ENCODE measurements at regions of chr2 and their contacts with region 1.

Region 1: DNA sequence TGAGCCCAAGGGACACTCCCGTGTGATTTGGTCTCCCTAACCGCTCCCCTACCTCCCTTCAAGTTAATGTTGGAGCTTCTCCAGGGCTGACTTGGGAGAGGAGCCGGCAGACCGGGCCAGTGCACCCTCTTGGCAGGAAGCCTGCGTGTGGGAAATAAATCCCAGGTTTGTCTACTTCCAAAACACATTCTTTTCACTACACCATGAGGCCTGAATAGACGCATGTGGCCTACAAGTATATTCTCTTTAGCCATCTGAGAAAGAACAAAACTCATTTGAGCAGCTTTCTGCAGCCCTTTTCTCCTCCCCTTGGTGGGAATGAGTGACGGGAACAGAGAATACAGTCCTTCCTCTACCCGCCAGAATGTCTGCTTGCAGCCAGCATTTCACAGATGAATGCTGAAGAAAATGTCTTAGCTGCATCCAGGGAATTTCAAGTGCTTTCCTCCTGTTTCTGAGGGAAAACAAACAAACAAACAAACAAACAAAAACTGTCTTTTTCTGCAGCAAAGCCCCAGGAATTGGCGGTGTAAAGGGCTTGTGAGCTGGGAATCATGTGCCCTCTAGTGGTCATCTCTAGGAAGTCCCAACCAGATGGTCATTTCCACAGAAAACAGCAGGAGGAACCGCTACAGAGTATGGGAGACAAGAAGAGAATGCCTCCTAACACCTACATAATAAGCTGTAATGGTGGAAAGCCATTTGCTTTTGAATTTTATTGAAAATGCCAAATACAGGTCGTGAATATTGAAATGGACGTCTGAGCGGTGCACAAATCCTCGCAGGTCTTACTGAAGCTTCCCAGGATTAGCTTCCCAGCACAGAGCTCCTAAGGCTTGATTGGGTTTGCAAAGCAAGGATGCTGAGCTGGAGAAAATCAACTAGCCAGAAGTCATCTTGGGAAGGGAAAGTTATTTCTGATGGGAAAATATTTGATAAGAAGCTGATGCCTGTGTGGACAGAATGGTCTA is 41.2 kb upstream of the DAPL1 start:
- DNase-seq: peak; percentile 22
- ATAC-seq: peak; percentile 88
- H3K4me3 Mint-ChIP-seq: peak overlapping the region; percentile 47
- H3K27ac Mint-ChIP-seq: no peak overlapping the region
- H3K4me1 Mint-ChIP-seq: peaks cover 8% of the 10 kb centered on the region
- H3K27me3 Mint-ChIP-seq: no peaks in the 10 kb centered on the region
- CTCF ChIP-seq: peak; percentile 81

Region 2: GRCh38 chr2:158034199-158034866 is 719.6 kb before region 1 on chr2:
- CTCF ChIA-PET with region 1: interaction called, 45 read pairs
- POLR2A ChIA-PET with region 1: no interaction called
- DNase-seq: peak; percentile 31
- ATAC-seq: peak; percentile 99
- H3K4me3 Mint-ChIP-seq: no peak overlapping the region
- H3K27ac Mint-ChIP-seq: no peak overlapping the region
- H3K4me1 Mint-ChIP-seq: peaks cover 2% of the 10 kb centered on the region; the same call in 1 of the 2 replicates
- H3K27me3 Mint-ChIP-seq: no peaks in the 10 kb centered on the region
- CTCF ChIP-seq: 0 out of 2 replicates have a peak, but pooled peaks have one; percentile 19

Region 3: GRCh38 chr2:158512323-158512722 is 241.6 kb before region 1 on chr2:
- CTCF ChIA-PET with region 1: no interaction called
- POLR2A ChIA-PET with region 1: no interaction called
- DNase-seq: no peak
- ATAC-seq: no peak
- H3K4me3 Mint-ChIP-seq: no peak overlapping the region
- H3K27ac Mint-ChIP-seq: no peak overlapping the region
- H3K4me1 Mint-ChIP-seq: peaks cover 29% of the 10 kb centered on the region
- H3K27me3 Mint-ChIP-seq: no peaks in the 10 kb centered on the region
- CTCF ChIP-seq: no peak

Region 4: GRCh38 chr2:158688722-158689121 is 65.2 kb before region 1 on chr2:
- CTCF ChIA-PET with region 1: interaction called, 16 read pairs
- POLR2A ChIA-PET with region 1: no interaction called
- DNase-seq: no peak
- ATAC-seq: peak; percentile 30
- H3K4me3 Mint-ChIP-seq: no peak overlapping the region
- H3K27ac Mint-ChIP-seq: no peak overlapping the region
- H3K4me1 Mint-ChIP-seq: peaks cover 11% of the 10 kb centered on the region
- H3K27me3 Mint-ChIP-seq: no peaks in the 10 kb centered on the region; the same call in 1 of the 2 replicates
- CTCF ChIP-seq: no peak

Region 5: GRCh38 chr2:158723917-158724690 is 29.8 kb before region 1 on chr2:
- CTCF ChIA-PET with region 1: interaction called, 61 read pairs
- POLR2A ChIA-PET with region 1: no interaction called
- DNase-seq: peak; percentile 55
- ATAC-seq: peak; percentile 92
- H3K4me3 Mint-ChIP-seq: no peak overlapping the region
- H3K27ac Mint-ChIP-seq: peak overlapping the region; percentile 50
- H3K4me1 Mint-ChIP-seq: peaks cover 23% of the 10 kb centered on the region
- H3K27me3 Mint-ChIP-seq: no peaks in the 10 kb centered on the region; the same call in 1 of the 2 replicates
- CTCF ChIP-seq: peak; percentile 39

Region 6: DNA sequence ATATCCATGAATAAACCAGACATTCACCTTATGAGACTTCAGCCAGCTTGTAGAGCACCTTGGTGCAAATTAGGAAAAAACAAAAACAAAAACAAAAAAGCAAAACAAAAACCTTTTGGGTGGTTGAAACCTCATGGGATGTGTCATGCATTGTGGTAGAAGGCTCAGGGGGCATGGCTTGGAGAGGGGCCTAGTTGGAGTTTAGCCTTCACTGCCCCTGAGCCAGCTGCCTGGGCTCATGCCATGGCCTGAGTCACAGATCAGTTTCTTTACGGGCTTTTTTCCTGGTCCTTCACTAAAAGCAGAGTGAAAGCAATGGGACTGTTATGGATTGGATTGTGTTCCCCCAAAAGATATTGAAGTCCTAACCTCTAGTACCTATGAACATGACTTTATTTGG is 19.2 kb after region 1 on chr2:
- CTCF ChIA-PET with region 1: interaction called, 14 read pairs
- POLR2A ChIA-PET with region 1: no interaction called
- DNase-seq: no peak
- ATAC-seq: peak; percentile 41; the same call in 1 of the 2 replicates
- H3K4me3 Mint-ChIP-seq: no peak overlapping the region
- H3K27ac Mint-ChIP-seq: no peak overlapping the region
- H3K4me1 Mint-ChIP-seq: peaks cover 34% of the 10 kb centered on the region
- H3K27me3 Mint-ChIP-seq: no peaks in the 10 kb centered on the region; the same call in 1 of the 2 replicates
- CTCF ChIP-seq: no peak